ENCODE measurements at regions of chr19 and their contacts with region 1.

Region 1: GRCh38 chr19:18388100-18388959 is 2.4 kb downstream of the GDF15 start:
- DNase-seq: peak; percentile 90
- ATAC-seq: peak; percentile 69
- H3K4me3 Mint-ChIP-seq: peak overlapping the region; percentile 73
- H3K27ac Mint-ChIP-seq: no peak overlapping the region
- H3K4me1 Mint-ChIP-seq: peaks cover 29% of the 10 kb centered on the region
- H3K27me3 Mint-ChIP-seq: peaks cover 32% of the 10 kb centered on the region
- CTCF ChIP-seq: peak; percentile 100

Region 2: DNA sequence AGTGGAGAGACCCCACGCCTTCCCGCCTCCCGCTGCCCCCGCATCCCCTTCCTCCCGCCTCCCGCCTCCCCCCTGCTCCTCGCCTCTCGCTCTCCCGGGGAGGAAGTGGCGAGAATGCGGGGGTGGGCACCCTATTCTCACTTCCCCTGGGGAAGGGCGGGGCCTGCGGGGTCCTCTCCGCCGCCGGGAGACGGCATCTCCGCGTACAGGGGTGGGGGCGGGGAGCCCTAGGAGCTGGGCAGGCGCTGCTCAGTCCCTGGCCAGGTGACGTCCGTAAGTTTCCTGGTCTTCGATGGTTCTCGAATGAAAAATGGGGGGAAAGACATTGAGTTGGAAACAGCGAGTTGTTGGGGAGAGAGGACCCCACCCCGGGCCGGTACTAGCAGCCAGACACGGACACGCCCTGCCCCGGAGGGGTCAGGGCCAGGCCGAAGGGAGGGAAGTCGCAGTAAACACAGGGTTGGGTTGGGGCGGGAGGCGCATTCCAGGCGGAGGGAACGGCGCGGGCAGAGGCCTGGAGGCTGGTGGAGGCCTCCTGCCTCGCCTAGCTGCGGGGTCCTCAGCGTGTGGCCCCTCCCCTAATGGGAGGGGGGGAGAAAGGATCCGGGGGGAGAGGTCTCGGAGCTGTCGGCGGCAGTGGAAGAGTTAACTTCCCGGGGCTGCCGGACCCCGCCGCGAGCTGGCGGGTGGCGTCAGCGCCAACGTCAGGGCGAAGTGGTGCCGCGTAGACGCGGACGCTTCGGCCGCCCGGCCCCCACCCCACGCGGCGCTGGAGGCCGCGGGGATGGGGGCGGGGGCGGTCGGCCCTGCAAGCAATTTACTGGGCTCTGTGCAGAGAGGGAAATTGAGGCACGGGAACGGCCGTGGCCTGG is 96.5 kb before region 1 on chr19:
- CTCF ChIA-PET with region 1: interaction called, 15 read pairs
- POLR2A ChIA-PET with region 1: interaction called, 4 read pairs
- DNase-seq: peak; percentile 73
- ATAC-seq: peak; percentile 14
- H3K4me3 Mint-ChIP-seq: peak overlapping the region; percentile 83
- H3K27ac Mint-ChIP-seq: peak overlapping the region; percentile 99
- H3K4me1 Mint-ChIP-seq: peaks cover 48% of the 10 kb centered on the region
- H3K27me3 Mint-ChIP-seq: peaks cover 3% of the 10 kb centered on the region; the same call in 1 of the 2 replicates
- CTCF ChIP-seq: no peak

Region 3: DNA sequence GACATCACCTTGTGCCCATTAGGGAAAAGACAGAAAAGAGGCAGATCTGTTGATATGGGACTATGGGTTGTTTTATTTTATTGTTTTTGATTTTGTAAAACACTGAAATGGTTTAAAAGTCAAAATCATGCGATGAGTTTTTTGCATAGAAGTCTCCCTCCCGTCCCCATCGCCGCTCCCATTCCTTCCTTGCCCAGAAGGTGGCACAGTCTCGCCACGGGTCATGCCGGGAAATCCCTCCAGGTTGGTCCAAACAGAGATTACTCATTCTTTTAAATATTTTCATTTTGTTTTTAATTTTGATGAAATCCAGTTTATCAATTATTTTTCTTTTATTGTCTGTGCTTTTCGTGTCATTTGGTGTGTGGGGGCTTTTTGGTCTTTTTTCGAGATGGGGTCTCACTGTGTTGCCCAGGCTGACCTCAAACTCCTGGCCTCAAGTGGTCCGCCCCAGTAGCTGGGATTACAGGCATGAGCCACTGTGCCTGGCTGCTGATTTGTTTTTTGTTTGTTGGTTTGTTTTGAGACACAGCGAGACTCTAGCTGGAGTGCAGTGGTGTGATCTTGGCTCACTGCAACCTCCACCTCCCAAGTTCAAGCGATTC is 38.7 kb before region 1 on chr19:
- CTCF ChIA-PET with region 1: interaction called, 28 read pairs
- POLR2A ChIA-PET with region 1: interaction called, 4 read pairs
- DNase-seq: peak; percentile 71
- ATAC-seq: 0 out of 2 replicates have a peak, but pooled peaks have one; percentile 40
- H3K4me3 Mint-ChIP-seq: no peak overlapping the region
- H3K27ac Mint-ChIP-seq: peak overlapping the region; percentile 19; the same call in 1 of the 2 replicates
- H3K4me1 Mint-ChIP-seq: peaks cover 27% of the 10 kb centered on the region
- H3K27me3 Mint-ChIP-seq: no peaks in the 10 kb centered on the region
- CTCF ChIP-seq: 0 out of 2 replicates have a peak, but pooled peaks have one; percentile 18

Region 4: DNA sequence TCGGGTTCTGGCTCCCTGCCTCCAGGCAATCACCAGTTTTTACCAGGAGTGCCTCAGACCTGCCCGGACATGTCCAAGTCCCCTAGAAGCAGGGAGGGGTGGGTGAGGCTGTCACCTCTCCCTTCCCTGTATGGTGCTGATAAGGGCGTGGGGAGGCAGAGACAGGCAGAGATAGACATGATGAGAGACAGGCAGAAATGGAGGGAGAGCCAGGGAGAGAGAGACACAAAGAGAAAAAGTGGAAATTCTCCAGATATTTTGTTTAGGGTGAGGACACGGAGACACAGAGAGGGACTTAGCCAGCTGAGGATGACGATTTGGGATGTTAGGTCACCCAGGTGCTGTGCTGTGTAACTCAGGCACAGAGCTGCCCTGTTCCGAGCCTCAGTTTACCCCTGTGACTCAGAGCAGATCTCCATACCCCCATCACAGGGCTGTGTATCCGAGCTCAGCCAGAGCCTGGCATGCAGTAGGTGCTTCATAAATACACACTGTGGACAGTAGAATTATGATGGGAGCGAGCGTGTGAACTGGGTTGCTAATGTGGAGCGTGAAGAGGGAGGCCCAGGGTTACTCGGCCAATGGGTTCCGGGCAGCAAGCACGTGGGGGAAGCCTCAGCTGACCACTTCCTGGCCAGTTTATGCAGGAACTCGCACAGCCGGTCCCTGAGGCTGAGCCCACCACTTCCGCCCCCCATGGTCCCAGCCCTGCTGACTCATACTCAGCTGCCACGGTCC is 14.3 kb before region 1 on chr19:
- CTCF ChIA-PET with region 1: interaction called, 91 read pairs
- POLR2A ChIA-PET with region 1: interaction called, 6 read pairs
- DNase-seq: peak; percentile 88
- ATAC-seq: peak; percentile 79
- H3K4me3 Mint-ChIP-seq: no peak overlapping the region
- H3K27ac Mint-ChIP-seq: peak overlapping the region; percentile 99
- H3K4me1 Mint-ChIP-seq: peaks cover 27% of the 10 kb centered on the region
- H3K27me3 Mint-ChIP-seq: no peaks in the 10 kb centered on the region
- CTCF ChIP-seq: no peak

Region 5: DNA sequence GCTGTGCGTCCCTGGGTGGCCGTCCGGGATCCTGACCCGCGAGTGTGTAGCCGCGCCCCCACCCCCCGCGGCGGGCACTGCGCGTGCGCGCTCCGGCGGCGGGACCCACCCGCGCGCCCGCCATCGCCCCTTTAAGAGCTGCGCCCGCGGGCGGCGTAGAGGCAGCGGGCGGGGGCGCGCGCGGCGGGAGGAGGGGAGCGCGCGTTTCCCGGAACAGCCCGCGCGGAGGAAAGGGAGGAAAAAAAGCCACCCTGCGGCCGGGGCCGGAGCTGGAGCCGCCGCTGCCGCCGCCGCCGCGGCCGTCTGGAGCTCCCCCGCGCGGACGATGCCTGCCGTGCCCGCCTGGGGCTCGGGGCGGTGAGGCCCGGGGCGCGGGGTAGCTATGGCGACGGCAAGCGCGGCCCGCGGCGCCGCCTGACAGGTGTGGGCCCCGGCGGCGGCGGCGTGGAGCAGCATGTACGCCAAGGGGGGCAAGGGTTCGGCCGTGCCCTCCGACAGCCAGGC is 30.9 kb after region 1 on chr19 and contains the start of gene SSBP4:
- CTCF ChIA-PET with region 1: interaction called, 106 read pairs
- POLR2A ChIA-PET with region 1: no interaction called
- DNase-seq: peak; percentile 69
- ATAC-seq: peak; percentile 5; the same call in 1 of the 2 replicates
- H3K4me3 Mint-ChIP-seq: peak within 1 kb of the TSS; percentile 72
- H3K27ac Mint-ChIP-seq: no peak within 1 kb of the TSS
- H3K4me1 Mint-ChIP-seq: peaks cover 30% of the 10 kb centered on the region
- H3K27me3 Mint-ChIP-seq: peaks cover 32% of the 10 kb centered on the region
- CTCF ChIP-seq: no peak
- total RNA-seq, gene SSBP4: 44.5 to 51.2 TPM (median 47.4 TPM) in 3 replicates

Region 6: DNA sequence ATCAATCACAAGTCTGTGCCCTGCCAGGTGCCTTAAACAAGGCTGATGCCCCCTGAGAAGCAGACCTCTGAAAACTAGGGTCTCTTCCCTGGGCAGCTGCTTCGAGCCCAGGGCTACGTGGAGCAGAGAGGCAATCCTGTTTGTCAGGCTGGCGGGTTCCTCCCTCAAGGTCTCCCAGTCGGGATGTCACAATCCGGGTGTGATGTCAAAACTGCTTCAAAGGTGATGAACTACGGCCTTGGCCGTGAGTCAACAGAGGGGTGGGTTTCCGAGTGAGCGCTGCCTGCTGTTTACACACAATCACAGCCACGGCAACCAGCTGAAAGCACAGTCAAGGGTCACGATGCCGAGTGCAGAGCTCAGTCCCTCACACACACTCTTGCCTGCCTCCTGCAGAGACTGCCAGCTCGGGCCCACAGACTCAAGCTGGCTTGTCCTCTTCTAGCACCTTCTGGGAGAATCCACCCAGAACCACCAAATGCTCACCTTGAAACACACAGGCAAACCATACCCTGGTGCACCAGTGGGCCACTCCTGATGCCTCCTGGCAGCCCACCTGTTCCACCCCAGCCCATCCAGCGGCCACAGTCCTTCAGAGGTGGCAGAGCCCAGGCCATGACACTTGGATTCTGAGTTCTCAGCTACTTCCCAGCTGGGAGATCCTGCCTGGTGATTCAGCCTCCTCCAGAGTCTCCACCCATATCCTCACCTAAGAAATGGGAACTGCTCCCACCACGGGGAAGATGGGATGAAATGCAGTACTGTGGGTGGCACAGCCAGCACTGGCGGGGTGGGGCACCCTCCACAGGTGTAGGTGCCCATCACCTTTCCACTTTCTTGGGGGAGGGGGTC is 126.7 kb after region 1 on chr19:
- CTCF ChIA-PET with region 1: no interaction called
- POLR2A ChIA-PET with region 1: no interaction called
- DNase-seq: no peak
- ATAC-seq: no peak
- H3K4me3 Mint-ChIP-seq: no peak overlapping the region
- H3K27ac Mint-ChIP-seq: peak overlapping the region; percentile 48
- H3K4me1 Mint-ChIP-seq: peaks cover 3% of the 10 kb centered on the region
- H3K27me3 Mint-ChIP-seq: no peaks in the 10 kb centered on the region
- CTCF ChIP-seq: no peak